A549 (cell line): ENCODE measurements at regions of chr1 and their contacts with region 1.

Region 1: GRCh38 chr1:16175610-16176553 is 20.0 kb upstream of the EPHA2 start:
- DNase-seq: peak in 1 of 2 experiments; percentile 74
- ATAC-seq: peak; percentile 26 to 41; a peak in 3 of 6 replicates
- H3K4me3 ChIP-seq: no peak overlapping the region
- H3K27ac ChIP-seq: peak overlapping the region; percentile 96 to 97
- H3K4me1 ChIP-seq: peaks cover 96% of the 10 kb centered on the region
- CTCF ChIP-seq: no peak
- EP300 ChIP-seq: no peak
- POLR2A ChIP-seq: no peak
- RAD21 ChIP-seq: no peak

Region 2: DNA sequence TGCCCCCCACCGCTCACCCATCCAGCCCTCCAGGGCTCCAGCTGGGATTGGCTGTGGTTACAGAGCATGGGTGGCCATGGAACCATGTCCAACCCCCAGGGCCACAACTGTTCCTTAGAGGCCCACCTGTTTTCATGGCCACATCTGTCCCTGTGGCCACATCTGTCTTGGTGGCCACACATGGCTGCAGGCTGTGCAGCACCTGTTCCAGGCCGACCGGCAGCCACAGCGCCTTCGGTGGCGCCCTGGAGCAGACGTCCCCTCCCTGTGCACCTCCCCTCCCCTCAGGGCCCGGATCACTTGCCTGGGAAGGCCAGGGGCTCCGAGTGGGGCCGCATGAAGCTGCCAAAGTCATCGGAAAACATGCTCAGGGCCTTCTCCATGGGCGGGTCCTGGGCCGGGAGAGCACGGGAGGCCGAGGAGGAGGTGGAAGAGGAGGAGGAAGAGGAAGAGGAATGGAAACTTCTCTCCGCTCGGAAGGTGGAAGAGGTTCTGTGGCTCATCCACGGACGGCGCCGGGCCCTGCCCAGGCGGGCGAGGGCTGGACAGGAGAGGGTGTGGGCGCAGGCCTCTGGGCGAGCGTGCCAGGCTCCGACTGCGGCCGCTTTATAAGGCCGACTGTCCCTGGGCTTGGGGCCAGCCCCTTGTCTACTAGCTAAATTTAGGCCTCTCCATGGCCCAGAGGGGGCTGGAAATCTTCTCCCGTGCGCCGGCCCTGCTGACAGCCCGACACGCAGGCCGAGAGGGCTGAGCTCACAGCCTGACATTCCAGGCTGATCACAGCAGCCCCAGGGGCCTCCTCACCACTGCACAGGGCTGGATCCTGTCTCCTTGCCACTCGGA is 158.2 kb before region 1 on chr1 and contains the start of gene HSPB7:
- CTCF ChIA-PET with region 1: no interaction called
- POLR2A ChIA-PET with region 1: no interaction called
- DNase-seq: no peak
- ATAC-seq: no peak; a peak in 1 of 6 replicates
- H3K4me3 ChIP-seq: no peak within 1 kb of the TSS
- H3K27ac ChIP-seq: no peak within 1 kb of the TSS; a peak in 1 of 6 replicates
- H3K4me1 ChIP-seq: peaks cover 19% of the 10 kb centered on the region
- CTCF ChIP-seq: no peak
- EP300 ChIP-seq: no peak
- POLR2A ChIP-seq: no peak
- RAD21 ChIP-seq: no peak
- polyA plus RNA-seq, gene HSPB7: not detected in 2 replicates

Region 3: DNA sequence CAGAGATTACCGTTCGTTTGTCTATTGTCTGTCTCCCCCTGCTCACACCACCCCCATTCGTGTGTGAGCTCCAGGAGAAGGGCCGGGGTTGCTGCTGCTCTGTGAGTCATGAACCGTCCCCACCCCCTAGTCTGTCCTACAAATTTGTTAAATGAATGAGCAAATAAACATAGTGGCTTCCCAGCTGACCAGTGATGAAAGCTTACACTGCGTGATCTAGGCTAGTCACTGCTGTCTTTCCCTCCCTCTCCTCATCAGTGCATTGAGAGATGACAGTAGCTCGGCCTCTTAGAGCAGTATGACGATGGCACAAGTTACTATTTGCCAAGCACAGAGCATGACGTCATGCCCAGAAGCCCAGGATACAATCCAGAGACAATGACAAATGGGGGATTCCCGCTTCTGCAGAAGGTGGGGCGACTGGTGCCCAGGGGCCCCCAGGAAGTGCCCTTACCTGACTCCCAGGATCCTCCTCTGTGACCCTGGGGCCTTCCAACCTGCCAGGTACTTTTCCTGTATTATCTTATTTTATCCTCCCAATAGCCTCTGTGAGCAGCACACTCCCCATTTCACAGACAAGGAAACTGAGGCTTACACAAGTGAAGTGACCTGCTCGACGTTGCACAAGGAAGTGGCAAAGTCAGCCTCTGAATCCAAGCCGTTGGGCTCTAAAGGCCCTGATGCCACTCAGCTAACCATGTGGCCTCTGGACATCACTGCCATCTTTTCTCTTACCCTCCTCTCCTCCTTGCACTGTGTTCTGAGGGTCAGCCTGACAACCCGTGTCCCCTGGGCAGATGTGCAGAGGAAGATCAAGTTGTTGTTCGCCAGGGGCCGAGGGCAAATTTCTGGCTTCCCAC is 11.4 kb before region 1 on chr1:
- CTCF ChIA-PET with region 1: interaction called, 3 read pairs
- POLR2A ChIA-PET with region 1: interaction called, 17 read pairs
- DNase-seq: peak; percentile 80 to 95
- ATAC-seq: peak; percentile 79 to 86
- H3K4me3 ChIP-seq: no peak overlapping the region
- H3K27ac ChIP-seq: peak overlapping the region; percentile 81 to 97
- H3K4me1 ChIP-seq: peaks cover 73% of the 10 kb centered on the region
- CTCF ChIP-seq: no peak
- EP300 ChIP-seq: peak; percentile 34 to 64; a peak in 2 of 5 replicates
- POLR2A ChIP-seq: no peak
- RAD21 ChIP-seq: peak in 1 of 2 experiments; percentile 15; a peak in 2 of 5 replicates